RWPE1 (cell line): ENCODE measurements at regions of chrX and their contacts with region 1.

Region 1: DNA sequence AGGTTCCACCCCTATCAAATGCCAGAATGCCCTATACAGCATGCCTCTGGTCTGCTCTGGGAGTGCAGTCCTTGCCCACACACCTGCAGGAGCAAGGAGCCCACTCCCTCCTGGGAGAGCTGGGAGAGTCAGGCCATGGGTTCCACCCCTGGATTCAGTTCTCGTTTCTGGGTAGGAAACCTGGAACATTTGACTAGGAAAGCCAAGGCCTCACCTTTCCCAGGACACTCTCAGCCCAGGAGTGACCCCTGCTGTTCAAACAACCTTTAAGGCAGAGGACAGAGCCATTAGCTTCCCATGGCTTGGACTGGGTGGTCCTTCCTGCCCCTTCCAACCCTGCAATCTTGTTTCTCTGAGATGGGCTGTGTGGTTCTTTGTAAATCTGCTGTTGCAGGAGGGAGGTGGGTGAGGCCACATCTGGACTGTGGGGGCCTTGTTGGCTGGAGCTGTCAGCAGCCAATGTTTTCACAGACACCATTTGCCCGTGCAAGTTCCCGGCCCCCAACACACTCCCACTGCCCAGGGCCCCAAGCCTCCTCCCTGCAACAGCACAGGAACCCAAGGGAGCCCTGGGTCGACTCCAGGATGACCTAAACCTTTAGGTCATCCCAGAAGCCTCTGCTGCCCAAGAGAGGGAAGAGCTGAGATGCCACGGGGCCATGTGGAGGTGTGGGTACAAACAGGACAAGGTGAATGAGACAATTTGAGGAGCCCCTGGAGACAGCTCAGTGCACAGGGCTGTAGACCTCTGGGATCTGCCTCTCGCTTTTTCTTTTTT is 104.4 kb downstream of the PJA1 start:
- DNase-seq: peak; percentile 25
- H3K27ac ChIP-seq: no peak overlapping the region
- CTCF ChIP-seq: no peak; the same call in 1 of the 2 replicates

Region 2: DNA sequence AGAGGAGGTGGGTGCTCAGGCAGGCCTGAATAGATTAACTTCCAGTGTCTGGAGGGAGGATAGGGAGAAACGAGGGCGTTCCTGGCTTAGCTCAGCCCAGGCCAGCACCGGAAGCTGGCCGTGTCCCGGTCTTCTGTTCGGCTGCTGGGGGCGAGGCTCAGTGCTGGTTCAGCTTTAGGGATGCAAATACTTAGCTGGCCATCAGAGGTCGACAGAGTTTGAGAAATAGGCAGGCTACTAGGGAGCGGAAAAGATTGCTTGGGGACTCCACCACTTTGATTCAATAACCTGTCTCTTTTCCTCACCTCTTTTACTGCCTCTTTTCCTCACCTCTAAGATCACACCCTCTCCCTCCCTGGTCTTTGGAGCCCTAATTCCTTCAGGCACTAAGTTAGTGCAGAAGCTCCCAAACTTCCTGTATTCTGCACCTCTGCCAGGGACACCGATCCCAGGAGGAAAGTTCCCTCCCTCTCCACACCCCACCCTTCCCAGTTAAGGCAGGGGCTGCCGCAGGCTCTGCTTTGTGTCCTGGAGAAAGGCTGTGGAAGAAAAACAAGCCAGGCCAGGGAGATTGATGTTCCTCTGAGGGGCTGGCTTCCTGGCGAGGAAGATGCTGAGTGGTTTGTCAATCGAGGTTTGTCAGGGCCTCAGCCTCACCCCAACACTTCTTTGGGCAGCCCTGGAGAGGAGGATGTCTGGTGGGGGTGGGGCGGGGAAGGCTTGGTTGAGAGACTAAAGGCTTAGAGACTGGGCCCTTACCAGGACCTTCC is 238.0 kb before region 1 on chrX:
- CTCF ChIA-PET with region 1: interaction called, 14 read pairs
- POLR2A ChIA-PET with region 1: no interaction called
- DNase-seq: no peak
- H3K27ac ChIP-seq: no peak overlapping the region
- CTCF ChIP-seq: peak; percentile 77